Panc1 (cell line): ENCODE measurements at regions of chr5 and their contacts with region 1.

Region 1: DNA sequence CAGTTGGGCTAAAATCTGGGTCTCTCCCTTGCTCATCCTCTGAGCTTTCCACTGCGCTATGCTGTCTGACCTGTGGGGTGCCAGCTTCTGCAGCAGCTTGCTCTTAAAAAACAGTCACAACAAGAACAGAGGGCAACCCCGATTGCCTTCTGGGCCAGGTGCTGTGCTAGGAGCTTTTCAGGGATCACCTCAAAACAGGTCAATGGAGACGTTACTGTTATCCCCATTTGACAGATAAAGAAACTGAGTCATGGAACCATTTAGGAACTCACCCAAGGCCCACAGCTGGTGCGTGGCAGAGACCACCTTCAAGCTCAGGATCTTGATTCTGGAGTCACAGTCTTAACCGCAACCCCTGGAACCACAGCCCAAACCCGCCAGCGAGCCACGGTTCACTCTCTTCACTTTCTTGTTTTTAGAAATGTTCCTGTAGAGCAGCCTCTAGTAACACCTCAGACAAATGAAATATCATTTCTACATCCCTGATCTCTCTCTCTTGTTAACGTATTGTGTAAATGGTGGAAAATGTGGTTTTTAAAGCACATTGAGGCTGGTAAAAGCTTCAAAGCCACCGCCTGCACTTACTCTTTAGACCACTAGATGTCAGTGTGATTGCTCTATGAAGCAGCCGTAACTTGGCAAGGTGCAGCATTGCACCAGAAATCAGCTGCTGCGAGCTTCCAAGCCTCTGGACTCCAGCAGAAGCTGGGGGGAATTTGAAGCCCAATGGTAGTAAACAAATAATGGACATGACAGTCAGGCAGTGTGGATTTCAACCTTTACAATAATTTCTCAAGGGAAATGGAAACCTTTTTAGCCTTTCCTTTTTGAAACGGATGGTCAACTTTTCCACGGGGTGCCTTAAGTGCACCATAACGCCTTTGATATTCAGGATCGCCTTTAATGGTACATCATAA is 1.7 kb downstream of the FYB1 start:
- DNase-seq: peak; percentile 74
- ATAC-seq: peak; percentile 87
- H3K4me3 ChIP-seq: no peak overlapping the region
- H3K27ac ChIP-seq: no peak overlapping the region
- H3K4me1 ChIP-seq: no peaks in the 10 kb centered on the region
- H3K27me3 ChIP-seq: no peaks in the 10 kb centered on the region
- CTCF ChIP-seq: peak; percentile 93

Region 2: GRCh38 chr5:37400501-37400900 is 1817.1 kb before region 1 on chr5:
- CTCF ChIA-PET with region 1: no interaction called
- POLR2A ChIA-PET with region 1: interaction called, 11 read pairs
- in situ Hi-C with region 1: no loop called
- intact Hi-C with region 1: no loop called
- DNase-seq: no peak
- ATAC-seq: peak; percentile 51; the same call in 1 of the 2 replicates
- H3K4me3 ChIP-seq: no peak overlapping the region
- H3K27ac ChIP-seq: no peak overlapping the region
- H3K4me1 ChIP-seq: no peaks in the 10 kb centered on the region
- H3K27me3 ChIP-seq: no peaks in the 10 kb centered on the region
- CTCF ChIP-seq: no peak

Region 3: GRCh38 chr5:39058178-39058921 is 159.3 kb before region 1 on chr5:
- CTCF ChIA-PET with region 1: no interaction called
- POLR2A ChIA-PET with region 1: no interaction called
- in situ Hi-C with region 1: no loop called
- intact Hi-C with region 1: no loop called
- DNase-seq: no peak
- ATAC-seq: no peak
- H3K4me3 ChIP-seq: peak overlapping the region; percentile 12 to 20; a peak in 3 of 4 replicates
- H3K27ac ChIP-seq: peak overlapping the region; percentile 64; the same call in 1 of the 2 replicates
- H3K4me1 ChIP-seq: peaks cover 3% of the 10 kb centered on the region; the same call in 1 of the 2 replicates
- H3K27me3 ChIP-seq: no peaks in the 10 kb centered on the region
- CTCF ChIP-seq: no peak

Region 4: GRCh38 chr5:39283231-39283818 is 65.7 kb after region 1 on chr5:
- CTCF ChIA-PET with region 1: interaction called, 4 read pairs
- POLR2A ChIA-PET with region 1: no interaction called
- in situ Hi-C with region 1: no loop called
- intact Hi-C with region 1: loop called (anchors 2 kb)
- DNase-seq: peak; percentile 74
- ATAC-seq: peak; percentile 92
- H3K4me3 ChIP-seq: no peak overlapping the region
- H3K27ac ChIP-seq: no peak overlapping the region
- H3K4me1 ChIP-seq: no peaks in the 10 kb centered on the region
- H3K27me3 ChIP-seq: peaks cover 4% of the 10 kb centered on the region; the same call in 1 of the 2 replicates
- CTCF ChIP-seq: peak; percentile 74

Region 5: DNA sequence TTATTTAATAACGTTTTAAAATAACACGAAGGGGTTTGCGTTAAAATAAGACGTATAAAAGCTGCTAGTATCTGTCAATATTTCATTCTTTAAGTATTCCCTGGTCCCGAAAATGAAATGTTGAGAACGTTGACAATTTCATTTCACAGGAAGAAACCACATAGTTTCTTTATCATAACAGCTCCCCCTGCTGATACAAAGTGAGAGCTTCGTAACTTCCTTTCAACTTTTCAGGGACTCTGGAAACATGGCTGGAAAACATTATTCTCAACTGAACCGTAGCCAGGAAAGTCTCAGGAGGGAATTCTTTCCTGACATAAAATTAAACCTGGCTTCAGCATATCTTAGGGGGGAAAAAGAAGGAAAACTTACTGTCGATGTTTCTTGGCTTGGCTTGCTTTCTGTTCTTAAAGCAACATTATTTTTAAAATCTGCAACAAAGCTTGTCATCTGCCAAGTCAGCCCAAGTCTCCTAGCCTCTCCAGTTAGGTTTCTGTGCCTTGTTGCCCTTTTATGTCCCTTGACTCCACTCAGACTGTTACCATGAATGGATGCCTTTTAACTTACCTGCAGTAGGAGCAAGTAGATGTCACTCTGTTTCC is 330.0 kb after region 1 on chr5:
- CTCF ChIA-PET with region 1: interaction called, 7 read pairs
- POLR2A ChIA-PET with region 1: no interaction called
- in situ Hi-C with region 1: no loop called
- intact Hi-C with region 1: loop called (anchors 5 kb)
- DNase-seq: peak; percentile 42
- ATAC-seq: no peak; the same call in 1 of the 2 replicates
- H3K4me3 ChIP-seq: no peak overlapping the region
- H3K27ac ChIP-seq: no peak overlapping the region
- H3K4me1 ChIP-seq: no peaks in the 10 kb centered on the region
- H3K27me3 ChIP-seq: peaks cover 1% of the 10 kb centered on the region
- CTCF ChIP-seq: peak; percentile 72; the same call in 1 of the 2 replicates

Region 6: GRCh38 chr5:39570403-39571027 is 352.9 kb after region 1 on chr5:
- CTCF ChIA-PET with region 1: no interaction called
- POLR2A ChIA-PET with region 1: no interaction called
- in situ Hi-C with region 1: no loop called
- intact Hi-C with region 1: loop called (anchors 2 kb)
- DNase-seq: peak; percentile 35
- ATAC-seq: no peak
- H3K4me3 ChIP-seq: no peak overlapping the region
- H3K27ac ChIP-seq: no peak overlapping the region
- H3K4me1 ChIP-seq: no peaks in the 10 kb centered on the region
- H3K27me3 ChIP-seq: peaks cover 15% of the 10 kb centered on the region
- CTCF ChIP-seq: peak; percentile 71; the same call in 1 of the 2 replicates